Heart right ventricle (tissue), 16 donors: ENCODE measurements at regions of chr10 and their contacts with region 1.

Region 1: DNA sequence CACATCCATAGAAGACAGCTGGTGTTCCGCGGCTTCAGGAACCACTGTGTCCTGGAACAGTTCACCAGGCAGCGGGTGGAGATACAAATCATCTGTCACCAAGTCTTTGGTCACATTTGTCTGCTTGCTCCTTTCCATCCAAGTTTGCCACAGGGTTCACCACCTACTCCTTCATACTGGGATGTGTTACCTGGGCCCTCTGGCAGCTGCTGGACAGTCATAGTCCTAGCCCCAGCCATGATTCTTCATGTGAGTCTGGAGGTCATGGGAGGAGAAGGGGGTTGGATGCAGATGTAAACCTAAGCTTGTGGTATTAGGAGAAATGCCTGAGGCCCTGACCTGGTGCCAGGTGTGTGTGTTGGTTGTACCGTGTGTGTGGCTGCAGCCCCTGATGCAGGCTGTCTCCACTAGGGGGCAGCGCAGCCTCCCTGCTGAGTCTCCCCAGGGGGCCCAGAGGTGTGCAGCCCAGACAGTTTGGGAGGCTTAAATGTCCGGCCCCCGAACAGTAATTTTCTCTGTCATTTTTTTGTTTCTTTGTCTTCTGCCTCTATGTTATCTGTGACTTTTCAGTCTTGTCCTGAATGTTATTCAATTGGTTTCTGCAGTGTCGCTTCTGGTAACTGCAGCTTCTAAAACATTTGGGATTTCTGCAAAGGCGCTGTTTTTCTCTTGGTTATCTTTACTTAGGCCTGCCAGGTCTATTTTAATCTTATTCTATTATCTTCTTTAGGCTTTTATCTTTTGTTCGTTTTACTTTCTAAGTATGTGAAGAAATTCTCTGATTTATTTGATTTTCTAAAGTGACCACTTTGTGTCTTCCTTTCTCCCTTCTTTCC is 14.8 kb downstream of the NPS start:
- DNase-seq: peak in 1 of 2 donors; percentile 35
- ATAC-seq: peak in 1 of 8 donors; percentile 52
- H3K4me3 ChIP-seq: no peak overlapping the region
- H3K27ac ChIP-seq: no peak overlapping the region
- H3K4me1 ChIP-seq: peaks cover 0 to 7% (median 0%) of the 10 kb centered on the region in 9 donors
- H3K27me3 ChIP-seq: no peaks in the 10 kb centered on the region
- CTCF ChIP-seq: peak; percentile 27 to 68 (median 48)

Region 2: GRCh38 chr10:127694580-127695193 is 130.8 kb after region 1 on chr10:
- intact Hi-C with region 1: loop called in 1 of 10 experiments (anchors 10 kb)
- DNase-seq: no peak
- ATAC-seq: no peak
- H3K4me3 ChIP-seq: no peak overlapping the region
- H3K27ac ChIP-seq: no peak overlapping the region
- H3K4me1 ChIP-seq: no peaks in the 10 kb centered on the region
- H3K27me3 ChIP-seq: peaks cover 0 to 34% (median 9%) of the 10 kb centered on the region in 7 donors
- CTCF ChIP-seq: peak in 6 of 9 donors; percentile 3 to 42 (median 22)

Region 3: DNA sequence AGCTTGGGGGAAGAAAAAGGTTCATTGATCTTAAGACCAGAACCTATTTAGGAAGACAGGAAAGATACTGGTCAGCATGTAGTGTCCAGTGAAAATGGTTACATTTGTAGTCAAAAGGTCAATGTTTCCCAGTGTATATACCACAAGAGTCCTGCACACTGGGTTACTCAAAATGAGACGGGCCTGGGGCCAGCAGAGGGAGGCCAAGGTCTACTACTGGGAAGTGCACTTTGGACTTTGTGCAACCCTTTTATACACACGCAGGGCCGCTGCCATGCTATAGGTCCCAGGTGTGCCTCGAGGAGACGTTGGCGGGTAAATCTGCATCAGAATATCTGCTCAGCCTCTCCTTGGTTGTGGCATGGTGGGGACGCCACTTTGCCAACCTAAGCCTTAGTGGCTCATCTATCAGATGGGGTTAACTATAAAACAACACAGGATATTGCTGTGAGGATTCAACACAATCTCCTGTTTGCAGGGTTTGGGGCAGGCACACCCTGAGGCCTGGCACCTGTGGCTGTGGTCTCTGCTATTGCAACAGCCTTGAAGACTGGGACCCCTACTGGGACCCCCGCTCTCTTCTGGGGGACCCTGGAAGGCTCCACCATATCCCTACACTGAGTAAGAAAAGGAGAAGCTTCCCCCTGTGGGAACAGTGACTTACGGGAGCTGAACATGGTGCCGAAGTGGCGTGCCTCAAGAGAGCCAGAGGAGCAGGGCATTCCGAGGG is 309.1 kb after region 1 on chr10:
- intact Hi-C with region 1: no loop called
- DNase-seq: no peak
- ATAC-seq: peak in 1 of 8 donors; percentile 50
- H3K4me3 ChIP-seq: no peak overlapping the region
- H3K27ac ChIP-seq: no peak overlapping the region
- H3K4me1 ChIP-seq: peaks cover 0 to 25% (median under 1%) of the 10 kb centered on the region in 9 donors
- H3K27me3 ChIP-seq: peaks cover 0 to 8% (median 0%) of the 10 kb centered on the region in 7 donors
- CTCF ChIP-seq: peak in 2 of 9 donors; percentile 28 to 32